Naive thymus-derived CD4-positive, alpha-beta T cell (primary cell): ENCODE measurements at regions of chr19 and their contacts with region 1.

Region 1: DNA sequence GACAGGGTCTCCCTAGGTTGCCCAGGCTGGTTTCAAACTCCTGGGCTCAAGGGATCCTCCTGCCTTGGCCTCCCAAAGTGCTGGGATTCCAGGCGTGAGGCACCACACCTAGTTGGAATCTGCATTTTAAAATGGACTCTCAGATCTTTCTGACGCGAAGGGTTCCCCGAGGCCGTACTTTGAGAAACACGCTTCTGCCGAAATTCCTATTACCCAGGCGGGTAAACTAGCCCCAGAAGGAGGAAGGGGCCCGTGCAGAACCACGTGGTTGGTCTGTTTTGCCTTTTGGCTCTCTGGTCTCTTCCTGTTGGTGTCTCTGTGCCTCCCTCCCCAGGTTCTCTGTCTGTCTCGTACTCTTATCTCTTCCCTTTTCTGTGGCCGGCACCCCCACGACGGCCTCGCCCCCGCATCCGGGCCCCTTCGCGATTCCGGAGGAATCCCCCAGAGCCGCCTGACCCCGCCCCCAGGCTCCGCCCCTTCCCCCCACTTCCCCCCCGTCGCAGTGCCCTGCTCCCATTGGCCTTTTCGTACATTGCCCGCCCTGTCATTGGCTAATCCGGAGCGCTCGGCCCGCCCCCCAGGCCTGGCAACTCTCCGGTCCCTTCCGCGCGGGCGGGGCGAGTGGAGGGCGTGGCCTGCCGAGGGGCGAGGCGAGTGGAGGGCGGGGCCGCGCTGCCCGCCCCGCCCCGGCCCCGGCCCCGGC is at the start of gene TNFAIP8L1:
- DNase-seq: peak; percentile 97 to 100 (median 99)
- ATAC-seq: peak; percentile 97
- H3K4me3 ChIP-seq: peak within 1 kb of the TSS; percentile 81
- H3K4me3 Mint-ChIP-seq: peak within 1 kb of the TSS; percentile 90 to 99 (median 96)
- H3K27ac ChIP-seq: peak within 1 kb of the TSS; percentile 92
- H3K27ac Mint-ChIP-seq: peak within 1 kb of the TSS; percentile 92 to 99 (median 97)
- H3K4me1 ChIP-seq: peaks cover 27 to 32% of the 10 kb centered on the region in 2 donors
- H3K4me1 Mint-ChIP-seq: peaks cover 15 to 43% (median 32%) of the 10 kb centered on the region in 7 donors
- H3K27me3 ChIP-seq: no peaks in the 10 kb centered on the region
- H3K27me3 Mint-ChIP-seq: no peaks in the 10 kb centered on the region
- total RNA-seq, gene TNFAIP8L1: 11.2 to 22.4 (median 20.6) TPM

Region 2: DNA sequence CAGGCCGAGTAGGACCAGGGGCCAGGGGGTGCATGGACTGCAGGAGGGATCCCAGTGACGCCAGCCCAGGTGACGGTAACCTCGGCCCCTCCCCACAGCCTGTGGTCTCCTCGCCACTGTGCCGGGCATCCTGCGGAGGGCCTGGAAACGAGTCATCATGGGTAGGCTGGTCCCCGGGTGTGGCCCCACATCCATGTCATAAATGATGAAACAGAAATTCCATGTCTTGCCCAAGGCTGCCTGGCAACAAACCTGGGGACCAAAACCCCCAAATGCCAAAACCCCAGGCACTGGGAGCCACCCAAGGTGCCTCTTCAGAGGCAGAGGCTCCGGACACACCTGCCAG is 535.9 kb before region 1 on chr19:
- CTCF ChIA-PET with region 1: no interaction called
- POLR2A ChIA-PET with region 1: no interaction called
- intact Hi-C with region 1: no loop called
- DNase-seq: no peak
- ATAC-seq: no peak
- H3K4me3 ChIP-seq: no peak overlapping the region
- H3K4me3 Mint-ChIP-seq: peak overlapping the region in 1 of 10 donors; percentile 67
- H3K27ac ChIP-seq: no peak overlapping the region
- H3K27ac Mint-ChIP-seq: peak overlapping the region in 2 of 9 donors; percentile 64 to 85
- H3K4me1 ChIP-seq: peaks cover 22 to 33% of the 10 kb centered on the region in 2 donors
- H3K4me1 Mint-ChIP-seq: peaks cover 20 to 44% (median 32%) of the 10 kb centered on the region in 7 donors
- H3K27me3 ChIP-seq: no peaks in the 10 kb centered on the region
- H3K27me3 Mint-ChIP-seq: no peaks in the 10 kb centered on the region

Region 3: GRCh38 chr19:4123615-4124568 is 515.1 kb before region 1 on chr19 and contains the start of gene MAP2K2:
- CTCF ChIA-PET with region 1: no interaction called
- POLR2A ChIA-PET with region 1: no interaction called
- intact Hi-C with region 1: loop called in 1 of 2 experiments (anchors 5 kb)
- DNase-seq: peak; percentile 91 to 99 (median 96)
- ATAC-seq: peak; percentile 96
- H3K4me3 ChIP-seq: peak within 1 kb of the TSS; percentile 77
- H3K4me3 Mint-ChIP-seq: peak within 1 kb of the TSS; percentile 89 to 100 (median 94)
- H3K27ac ChIP-seq: peak within 1 kb of the TSS; percentile 80
- H3K27ac Mint-ChIP-seq: peak within 1 kb of the TSS; percentile 89 to 97 (median 93)
- H3K4me1 ChIP-seq: peaks cover 10 to 11% of the 10 kb centered on the region in 2 donors
- H3K4me1 Mint-ChIP-seq: peaks cover 17 to 31% (median 25%) of the 10 kb centered on the region in 7 donors
- H3K27me3 ChIP-seq: no peaks in the 10 kb centered on the region
- H3K27me3 Mint-ChIP-seq: no peaks in the 10 kb centered on the region
- total RNA-seq, gene MAP2K2: 87.4 to 162 (median 123) TPM

Region 4: DNA sequence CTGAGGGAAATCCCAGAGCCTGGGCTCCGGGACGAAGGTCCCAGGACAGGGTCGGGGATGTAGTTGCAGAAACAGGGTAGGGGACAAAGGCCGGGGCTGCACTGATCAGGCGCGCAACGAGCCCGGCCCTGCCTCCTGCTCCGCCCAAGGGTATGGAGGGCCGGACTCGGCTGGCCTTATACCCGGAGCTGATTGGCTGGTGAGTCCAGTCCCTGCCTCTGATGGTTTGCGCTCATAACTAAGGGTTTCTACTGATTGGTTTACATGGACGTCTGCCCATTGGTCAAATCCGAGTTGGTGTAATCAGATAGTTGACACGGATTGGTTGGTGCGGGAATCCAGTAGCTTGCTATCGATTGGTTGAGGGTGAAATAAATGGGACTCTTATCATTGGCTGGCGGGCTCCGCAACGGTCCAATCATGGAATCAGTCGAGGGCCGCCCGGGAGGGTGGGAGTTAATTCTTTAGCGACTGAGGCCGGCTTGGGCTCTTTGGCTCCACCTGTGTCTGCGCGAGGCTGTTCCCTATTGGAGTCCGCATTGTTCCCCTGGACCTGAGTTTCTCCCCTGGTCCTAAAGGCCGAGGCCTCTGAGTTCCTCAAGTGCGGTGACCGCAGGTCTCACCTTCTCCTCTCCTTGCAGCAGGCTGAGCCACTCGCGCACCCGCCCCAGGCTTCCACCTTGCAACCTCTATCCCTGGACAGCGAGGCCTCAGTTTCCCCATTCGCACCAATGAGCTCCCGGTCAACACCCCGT is 296.2 kb before region 1 on chr19:
- CTCF ChIA-PET with region 1: no interaction called
- POLR2A ChIA-PET with region 1: no interaction called
- intact Hi-C with region 1: loop called in 1 of 2 experiments (anchors 1 kb)
- DNase-seq: peak; percentile 73 to 98 (median 97)
- ATAC-seq: peak; percentile 88
- H3K4me3 ChIP-seq: peak overlapping the region; percentile 100
- H3K4me3 Mint-ChIP-seq: peak overlapping the region; percentile 88 to 95 (median 92)
- H3K27ac ChIP-seq: peak overlapping the region; percentile 81
- H3K27ac Mint-ChIP-seq: peak overlapping the region; percentile 86 to 97 (median 94)
- H3K4me1 ChIP-seq: peaks cover 8 to 20% of the 10 kb centered on the region in 2 donors
- H3K4me1 Mint-ChIP-seq: peaks cover 20 to 46% (median 30%) of the 10 kb centered on the region in 7 donors
- H3K27me3 ChIP-seq: no peaks in the 10 kb centered on the region
- H3K27me3 Mint-ChIP-seq: peaks cover 0 to 2% (median 0%) of the 10 kb centered on the region in 5 donors

Region 5: GRCh38 chr19:4557971-4558941 is 80.7 kb before region 1 on chr19:
- CTCF ChIA-PET with region 1: interaction called, 11 read pairs
- POLR2A ChIA-PET with region 1: no interaction called
- intact Hi-C with region 1: loop called in 1 of 2 experiments (anchors 1 kb)
- DNase-seq: peak in 2 of 9 donors; percentile 24 to 48
- ATAC-seq: no peak
- H3K4me3 ChIP-seq: no peak overlapping the region
- H3K4me3 Mint-ChIP-seq: no peak overlapping the region
- H3K27ac ChIP-seq: no peak overlapping the region
- H3K27ac Mint-ChIP-seq: no peak overlapping the region
- H3K4me1 ChIP-seq: no peaks in the 10 kb centered on the region
- H3K4me1 Mint-ChIP-seq: peaks cover 0 to 13% (median 0%) of the 10 kb centered on the region in 7 donors
- H3K27me3 ChIP-seq: no peaks in the 10 kb centered on the region
- H3K27me3 Mint-ChIP-seq: peaks cover 0 to 14% (median 0%) of the 10 kb centered on the region in 5 donors

Region 6: GRCh38 chr19:4576016-4576933 is 62.7 kb before region 1 on chr19:
- CTCF ChIA-PET with region 1: interaction called, 29 read pairs
- POLR2A ChIA-PET with region 1: interaction called, 4 read pairs
- intact Hi-C with region 1: loop called (anchors 1 kb)
- DNase-seq: peak; percentile 20 to 75 (median 56)
- ATAC-seq: peak; percentile 67
- H3K4me3 ChIP-seq: no peak overlapping the region
- H3K4me3 Mint-ChIP-seq: no peak overlapping the region
- H3K27ac ChIP-seq: no peak overlapping the region
- H3K27ac Mint-ChIP-seq: peak overlapping the region in 1 of 9 donors; percentile 41
- H3K4me1 ChIP-seq: no peaks in the 10 kb centered on the region
- H3K4me1 Mint-ChIP-seq: peaks cover 0 to 3% (median 0%) of the 10 kb centered on the region in 7 donors
- H3K27me3 ChIP-seq: no peaks in the 10 kb centered on the region
- H3K27me3 Mint-ChIP-seq: peaks cover 29 to 56% (median 45%) of the 10 kb centered on the region in 5 donors

Region 7: DNA sequence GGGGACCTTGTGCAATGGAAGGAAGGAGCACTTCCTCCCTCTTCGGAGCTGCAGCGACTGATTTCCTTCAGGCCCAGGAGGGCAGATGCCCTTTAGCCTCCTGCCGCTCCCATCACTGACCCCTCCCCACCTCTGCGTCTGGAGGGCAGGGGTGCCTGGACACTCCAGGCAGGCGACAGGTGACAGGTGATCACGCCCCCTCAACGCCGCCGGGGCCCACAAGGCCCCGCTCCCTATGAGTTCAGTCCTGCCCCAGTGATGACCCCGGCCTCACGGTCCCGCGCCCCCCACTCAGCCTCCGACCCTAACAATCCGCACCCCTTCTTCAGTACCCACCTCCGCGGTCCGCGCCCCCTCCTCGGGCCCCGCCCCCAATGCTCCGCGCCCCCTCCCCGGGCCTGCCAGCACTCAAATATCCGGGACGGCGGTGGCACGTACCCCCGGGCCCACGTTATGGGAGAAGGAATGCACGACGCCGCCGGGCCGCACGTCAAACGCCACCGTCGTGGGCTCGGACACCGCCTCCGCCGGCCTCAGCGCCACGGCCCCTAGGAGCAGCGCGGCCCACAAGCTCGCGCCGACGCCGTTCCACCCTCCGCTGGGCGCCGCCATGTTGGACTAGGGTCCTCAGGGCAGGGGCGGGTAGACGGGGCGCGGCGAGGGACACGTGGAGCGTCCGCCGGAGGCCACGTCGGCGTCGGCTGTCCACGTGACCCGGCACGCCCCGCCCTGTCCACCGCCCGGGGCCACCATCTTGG is 30.9 kb after region 1 on chr19 and contains the start of gene MYDGF:
- CTCF ChIA-PET with region 1: no interaction called
- POLR2A ChIA-PET with region 1: interaction called, 5 read pairs
- intact Hi-C with region 1: loop called (anchors 1 kb)
- DNase-seq: peak; percentile 86 to 95 (median 92)
- ATAC-seq: peak; percentile 100
- H3K4me3 ChIP-seq: peak within 1 kb of the TSS; percentile 65
- H3K4me3 Mint-ChIP-seq: peak within 1 kb of the TSS; percentile 77 to 92 (median 86)
- H3K27ac ChIP-seq: peak within 1 kb of the TSS; percentile 81
- H3K27ac Mint-ChIP-seq: peak within 1 kb of the TSS; percentile 28 to 95 (median 84)
- H3K4me1 ChIP-seq: peaks cover 10 to 13% of the 10 kb centered on the region in 2 donors
- H3K4me1 Mint-ChIP-seq: peaks cover 0 to 20% (median 16%) of the 10 kb centered on the region in 7 donors
- H3K27me3 ChIP-seq: no peaks in the 10 kb centered on the region
- H3K27me3 Mint-ChIP-seq: no peaks in the 10 kb centered on the region
- total RNA-seq, gene MYDGF: 28.1 to 81.0 (median 32.1) TPM

Region 8: GRCh38 chr19:4902796-4903195 is 263.8 kb after region 1 on chr19 and contains the start of gene ARRDC5:
- CTCF ChIA-PET with region 1: no interaction called
- POLR2A ChIA-PET with region 1: no interaction called
- intact Hi-C with region 1: no loop called
- DNase-seq: no peak
- ATAC-seq: no peak
- H3K4me3 ChIP-seq: no peak within 1 kb of the TSS
- H3K4me3 Mint-ChIP-seq: no peak within 1 kb of the TSS
- H3K27ac ChIP-seq: no peak within 1 kb of the TSS
- H3K27ac Mint-ChIP-seq: peak within 1 kb of the TSS in 4 of 9 donors; percentile 5 to 43 (median 28)
- H3K4me1 ChIP-seq: no peaks in the 10 kb centered on the region
- H3K4me1 Mint-ChIP-seq: peaks cover 0 to 27% (median 20%) of the 10 kb centered on the region in 7 donors
- H3K27me3 ChIP-seq: no peaks in the 10 kb centered on the region
- H3K27me3 Mint-ChIP-seq: no peaks in the 10 kb centered on the region
- total RNA-seq, gene ARRDC5: 2.7 to 28.6 (median 13.6) TPM

Region 9: DNA sequence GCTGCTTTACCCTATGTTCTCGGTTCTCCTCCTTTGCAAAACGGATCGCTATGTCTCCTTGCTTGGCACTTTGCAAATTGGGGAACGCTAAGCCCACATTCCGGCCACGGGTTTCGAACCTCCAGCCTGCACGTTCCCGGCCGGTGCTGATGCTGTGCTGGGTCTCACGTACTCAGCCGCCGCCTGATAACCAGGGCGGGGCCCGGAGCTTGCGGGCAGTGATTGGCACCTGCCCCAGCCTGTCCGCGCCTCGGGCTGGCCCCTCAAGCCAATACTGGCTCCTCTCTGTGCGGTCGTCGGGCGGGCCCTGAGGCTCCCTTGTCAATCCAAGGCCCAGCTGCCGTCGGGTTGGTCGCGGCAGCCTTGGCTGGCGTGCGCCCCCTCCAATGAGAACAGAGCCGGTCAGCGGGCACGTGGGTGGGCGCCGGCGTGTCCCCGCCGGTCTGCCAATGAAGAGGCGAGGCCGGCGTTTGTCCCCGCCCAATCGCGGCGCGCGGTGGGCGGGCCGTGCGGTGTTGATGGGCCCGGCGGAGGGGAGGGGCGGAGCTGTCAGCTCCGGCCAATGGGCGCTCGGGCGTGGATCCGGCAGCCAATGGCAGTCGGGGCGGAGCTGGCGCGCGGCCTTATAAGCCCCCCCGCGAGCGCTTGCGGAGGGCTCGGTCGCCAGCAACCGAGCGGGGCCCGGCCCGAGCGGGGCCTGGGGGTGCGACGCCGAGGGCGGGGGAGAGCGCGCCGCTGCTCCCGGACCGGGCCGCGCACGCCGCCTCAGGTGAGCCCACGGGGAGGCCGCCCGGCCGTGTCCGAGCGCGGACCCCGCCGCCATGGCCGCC is 329.7 kb after region 1 on chr19 and contains the start of gene KDM4B:
- CTCF ChIA-PET with region 1: no interaction called
- POLR2A ChIA-PET with region 1: interaction called, 3 read pairs
- intact Hi-C with region 1: loop called in 1 of 2 experiments (anchors 2 kb)
- DNase-seq: peak; percentile 97 to 100 (median 99)
- ATAC-seq: peak; percentile 94
- H3K4me3 ChIP-seq: peak within 1 kb of the TSS; percentile 69
- H3K4me3 Mint-ChIP-seq: peak within 1 kb of the TSS; percentile 88 to 97 (median 94)
- H3K27ac ChIP-seq: peak within 1 kb of the TSS; percentile 67
- H3K27ac Mint-ChIP-seq: peak within 1 kb of the TSS; percentile 84 to 96 (median 91)
- H3K4me1 ChIP-seq: peaks cover 26 to 29% of the 10 kb centered on the region in 2 donors
- H3K4me1 Mint-ChIP-seq: peaks cover 26 to 40% (median 32%) of the 10 kb centered on the region in 7 donors
- H3K27me3 ChIP-seq: no peaks in the 10 kb centered on the region
- H3K27me3 Mint-ChIP-seq: no peaks in the 10 kb centered on the region
- total RNA-seq, gene KDM4B: 45.8 to 78.0 (median 65.8) TPM